Caco-2 (cell line): ENCODE measurements at regions of chr4 and their contacts with region 1.

Region 1: GRCh38 chr4:48963042-48963679 is 22.9 kb upstream of the CWH43 start:
- DNase-seq: peak; percentile 77 to 78
- H3K4me3 ChIP-seq: no peak overlapping the region
- H3K4me3 Mint-ChIP-seq: no peak overlapping the region
- H3K27ac Mint-ChIP-seq: no peak overlapping the region
- H3K4me1 ChIP-seq: no peaks in the 10 kb centered on the region
- H3K4me1 Mint-ChIP-seq: peaks cover 19% of the 10 kb centered on the region
- H3K27me3 ChIP-seq: no peaks in the 10 kb centered on the region
- H3K27me3 Mint-ChIP-seq: no peaks in the 10 kb centered on the region
- CTCF ChIP-seq: peak; percentile 89 to 94

Region 2: DNA sequence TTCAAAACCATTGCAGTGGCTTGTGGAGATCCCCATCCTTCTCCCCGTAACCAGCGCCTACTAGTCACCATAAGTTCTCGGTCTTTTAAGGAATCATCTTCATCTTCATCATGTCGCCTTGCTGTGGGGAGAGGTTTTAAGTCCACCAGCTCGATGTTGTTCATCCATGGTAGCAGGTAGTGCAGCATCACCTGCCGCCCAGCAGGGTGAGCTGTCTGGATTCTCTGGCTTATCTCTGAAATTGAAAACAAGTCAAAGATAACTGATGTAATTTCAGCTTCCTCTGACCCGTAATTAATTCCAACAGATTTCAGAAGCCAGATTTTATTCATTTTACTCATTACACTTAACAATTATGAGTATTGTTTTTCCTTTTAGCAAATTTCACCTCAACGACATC is 405.7 kb before region 1 on chr4:
- CTCF ChIA-PET with region 1: no interaction called
- POLR2A ChIA-PET with region 1: no interaction called
- intact Hi-C with region 1: loop called (anchors 1 kb)
- DNase-seq: peak in 1 of 2 experiments; percentile 10
- H3K4me3 ChIP-seq: no peak overlapping the region
- H3K4me3 Mint-ChIP-seq: no peak overlapping the region
- H3K27ac Mint-ChIP-seq: no peak overlapping the region
- H3K4me1 ChIP-seq: no peaks in the 10 kb centered on the region
- H3K4me1 Mint-ChIP-seq: no peaks in the 10 kb centered on the region
- H3K27me3 ChIP-seq: no peaks in the 10 kb centered on the region
- H3K27me3 Mint-ChIP-seq: no peaks in the 10 kb centered on the region
- CTCF ChIP-seq: peak; percentile 35 to 36

Region 3: GRCh38 chr4:48578132-48578968 is 384.8 kb before region 1 on chr4:
- CTCF ChIA-PET with region 1: no interaction called
- POLR2A ChIA-PET with region 1: no interaction called
- intact Hi-C with region 1: loop called (anchors 1 kb)
- DNase-seq: peak; percentile 45 to 61
- H3K4me3 ChIP-seq: no peak overlapping the region
- H3K4me3 Mint-ChIP-seq: no peak overlapping the region
- H3K27ac Mint-ChIP-seq: no peak overlapping the region
- H3K4me1 ChIP-seq: no peaks in the 10 kb centered on the region
- H3K4me1 Mint-ChIP-seq: no peaks in the 10 kb centered on the region
- H3K27me3 ChIP-seq: no peaks in the 10 kb centered on the region
- H3K27me3 Mint-ChIP-seq: no peaks in the 10 kb centered on the region
- CTCF ChIP-seq: peak; percentile 68 to 73

Region 4: DNA sequence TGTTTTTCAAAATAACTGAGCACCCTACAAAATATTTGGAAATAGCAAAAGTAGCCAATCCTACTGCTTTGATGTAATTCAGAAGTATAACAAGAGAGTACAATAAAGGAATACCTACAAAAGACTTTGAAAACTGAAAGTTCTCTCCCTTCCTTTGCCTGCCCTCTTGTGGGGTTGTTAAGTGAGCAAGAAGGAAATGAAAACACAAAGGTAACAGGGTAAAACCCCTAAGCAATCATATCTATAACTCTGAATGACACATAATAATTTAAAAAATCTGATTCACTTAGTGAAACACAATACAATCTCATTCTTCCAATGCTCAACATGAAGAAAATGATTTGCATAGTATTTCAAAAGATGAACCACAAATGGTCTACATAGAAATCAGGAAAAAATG is 281.3 kb before region 1 on chr4:
- CTCF ChIA-PET with region 1: no interaction called
- POLR2A ChIA-PET with region 1: no interaction called
- intact Hi-C with region 1: loop called (anchors 10 kb)
- DNase-seq: peak in 1 of 2 experiments; percentile 12
- H3K4me3 ChIP-seq: no peak overlapping the region
- H3K4me3 Mint-ChIP-seq: no peak overlapping the region
- H3K27ac Mint-ChIP-seq: no peak overlapping the region
- H3K4me1 ChIP-seq: peaks cover 7% of the 10 kb centered on the region; the same call in 1 of the 2 replicates
- H3K4me1 Mint-ChIP-seq: peaks cover 6% of the 10 kb centered on the region
- H3K27me3 ChIP-seq: no peaks in the 10 kb centered on the region
- H3K27me3 Mint-ChIP-seq: no peaks in the 10 kb centered on the region
- CTCF ChIP-seq: peak; percentile 22 to 42

Region 5: GRCh38 chr4:48906206-48907173 is 56.7 kb before region 1 on chr4 and contains the start of gene OCIAD2:
- CTCF ChIA-PET with region 1: no interaction called
- POLR2A ChIA-PET with region 1: no interaction called
- intact Hi-C with region 1: loop called (anchors 5 kb)
- DNase-seq: peak; percentile 45 to 57
- H3K4me3 ChIP-seq: peak within 1 kb of the TSS; percentile 62
- H3K4me3 Mint-ChIP-seq: peak within 1 kb of the TSS; percentile 79
- H3K27ac Mint-ChIP-seq: peak within 1 kb of the TSS; percentile 77
- H3K4me1 ChIP-seq: peaks cover 15% of the 10 kb centered on the region; the same call in 1 of the 2 replicates
- H3K4me1 Mint-ChIP-seq: peaks cover 11% of the 10 kb centered on the region
- H3K27me3 ChIP-seq: no peaks in the 10 kb centered on the region
- H3K27me3 Mint-ChIP-seq: no peaks in the 10 kb centered on the region
- CTCF ChIP-seq: no peak
- total RNA-seq, gene OCIAD2: 10.5 and 14.2 TPM in 2 replicates

Region 6: DNA sequence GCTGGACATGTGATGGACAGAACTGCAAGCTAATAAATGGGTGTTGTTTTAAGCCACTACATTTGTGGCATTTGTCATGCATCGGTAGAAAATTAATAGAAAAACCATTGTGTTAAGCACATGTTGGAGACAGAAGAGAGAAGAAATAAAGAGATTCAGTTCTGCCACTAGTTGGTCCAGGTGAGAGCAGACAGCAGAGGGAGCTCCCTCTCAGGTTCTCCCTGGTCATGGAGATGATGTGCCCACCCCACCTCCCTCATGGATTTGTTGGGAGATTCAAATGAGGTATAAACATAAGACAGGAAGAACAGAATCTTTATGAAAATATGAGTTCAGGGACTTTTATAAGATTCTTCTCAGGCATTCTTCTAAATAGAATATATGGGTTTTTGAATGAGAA is 19.8 kb before region 1 on chr4:
- CTCF ChIA-PET with region 1: interaction called, 4 read pairs
- POLR2A ChIA-PET with region 1: no interaction called
- intact Hi-C with region 1: loop called (anchors 1 kb)
- DNase-seq: peak; percentile 59 to 67
- H3K4me3 ChIP-seq: no peak overlapping the region
- H3K4me3 Mint-ChIP-seq: no peak overlapping the region
- H3K27ac Mint-ChIP-seq: no peak overlapping the region
- H3K4me1 ChIP-seq: 0 out of 2 replicates have a peak, but pooled peaks cover 2% of the 10 kb centered on the region
- H3K4me1 Mint-ChIP-seq: peaks cover 7% of the 10 kb centered on the region
- H3K27me3 ChIP-seq: no peaks in the 10 kb centered on the region
- H3K27me3 Mint-ChIP-seq: no peaks in the 10 kb centered on the region
- CTCF ChIP-seq: peak in 1 of 2 experiments; percentile 58

Region 7: DNA sequence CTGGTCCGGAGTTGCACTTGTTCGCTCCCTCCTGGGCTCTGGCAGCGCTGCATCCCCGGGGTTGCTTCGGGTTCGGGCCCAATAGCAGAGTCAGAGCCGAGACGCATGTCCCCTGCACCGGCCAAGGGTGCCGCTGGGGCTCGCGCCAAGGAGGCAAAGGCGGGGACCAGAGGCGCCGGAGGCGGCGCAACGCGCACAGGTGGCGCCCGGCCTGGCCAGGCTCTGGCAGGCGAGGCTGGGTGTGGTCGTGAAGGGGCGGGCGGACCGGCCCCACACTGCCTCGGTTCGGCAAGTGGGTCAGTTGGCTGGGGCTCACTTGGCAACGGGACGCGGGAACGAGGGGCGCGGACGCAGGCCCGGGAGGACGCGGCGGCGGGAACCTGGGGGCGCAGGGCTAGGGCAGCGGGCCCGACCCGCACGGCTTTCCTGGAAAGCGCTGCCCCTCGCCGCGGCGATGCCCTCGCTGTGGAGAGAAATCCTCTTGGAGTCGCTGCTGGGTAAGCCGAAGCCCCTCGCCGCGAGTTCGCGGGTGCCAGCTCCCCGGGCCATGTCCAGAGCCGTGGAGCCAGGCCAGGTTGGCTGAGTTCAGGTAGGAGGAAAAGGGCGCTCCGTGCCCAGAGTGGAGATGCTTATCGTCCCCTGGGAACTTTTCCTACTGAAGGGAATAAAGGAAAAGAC is 23.0 kb after region 1 on chr4 and contains the start of gene CWH43:
- CTCF ChIA-PET with region 1: no interaction called
- POLR2A ChIA-PET with region 1: no interaction called
- intact Hi-C with region 1: no loop called
- DNase-seq: no peak
- H3K4me3 ChIP-seq: no peak within 1 kb of the TSS
- H3K4me3 Mint-ChIP-seq: no peak within 1 kb of the TSS
- H3K27ac Mint-ChIP-seq: no peak within 1 kb of the TSS
- H3K4me1 ChIP-seq: no peaks in the 10 kb centered on the region
- H3K4me1 Mint-ChIP-seq: no peaks in the 10 kb centered on the region
- H3K27me3 ChIP-seq: no peaks in the 10 kb centered on the region
- H3K27me3 Mint-ChIP-seq: no peaks in the 10 kb centered on the region
- CTCF ChIP-seq: no peak
- total RNA-seq, gene CWH43: not detected in 2 replicates